ENCODE measurements at regions of chr2 and their contacts with region 1.

Region 1: DNA sequence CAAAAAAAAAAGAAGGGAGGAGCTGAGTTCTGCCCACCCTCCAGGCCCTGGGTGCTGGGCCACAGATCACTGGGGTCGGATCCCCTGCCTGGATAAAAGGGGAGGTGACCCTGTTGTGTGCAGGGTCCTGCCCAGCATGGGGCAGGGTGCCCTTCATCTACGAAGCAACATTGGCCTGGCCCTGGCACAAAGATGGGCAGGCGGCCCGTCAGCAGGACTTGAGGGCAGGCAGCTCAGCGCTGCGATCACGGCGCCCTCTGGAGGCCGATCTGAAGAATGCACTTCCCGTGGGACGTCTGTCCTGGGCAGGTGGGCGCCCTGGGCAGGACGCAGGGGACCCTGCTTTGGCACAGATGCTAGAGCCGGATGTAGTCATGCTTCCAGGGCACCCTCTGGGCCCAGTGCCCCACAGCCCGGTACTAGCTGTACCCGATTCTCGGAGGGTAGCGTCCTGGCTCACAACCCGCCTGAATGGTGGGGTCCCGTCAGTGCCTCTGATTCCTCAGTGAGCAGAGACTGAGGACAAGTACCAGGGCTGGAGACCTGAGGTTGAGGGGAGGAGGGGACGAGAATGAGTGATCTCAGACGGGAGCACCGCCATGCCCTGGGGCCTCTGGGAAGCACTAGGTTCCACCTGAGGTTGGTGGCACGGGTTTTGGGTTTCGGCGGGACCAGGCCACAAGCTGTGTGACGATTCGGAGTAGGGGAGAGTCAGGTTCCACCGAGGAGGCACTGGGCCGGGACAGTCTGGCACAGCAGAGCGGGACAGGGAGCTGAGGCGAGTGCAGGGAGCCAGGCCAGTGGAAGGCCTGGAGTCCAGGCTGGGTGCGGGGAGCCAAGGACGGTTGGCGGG is 18.0 kb downstream of the ARID5A start:
- DNase-seq: peak; percentile 44
- ATAC-seq: peak; percentile 31
- H3K4me3 ChIP-seq: peak overlapping the region; percentile 25 to 67 (median 29); a peak in 3 of 6 replicates
- H3K27ac ChIP-seq: no peak overlapping the region
- H3K4me1 ChIP-seq: peaks cover 69% of the 10 kb centered on the region
- H3K27me3 ChIP-seq: no peaks in the 10 kb centered on the region
- CTCF ChIP-seq: peak; percentile 97
- EP300 ChIP-seq: no peak
- POLR2A ChIP-seq: no peak
- RAD21 ChIP-seq: peak; percentile 87

Region 2: DNA sequence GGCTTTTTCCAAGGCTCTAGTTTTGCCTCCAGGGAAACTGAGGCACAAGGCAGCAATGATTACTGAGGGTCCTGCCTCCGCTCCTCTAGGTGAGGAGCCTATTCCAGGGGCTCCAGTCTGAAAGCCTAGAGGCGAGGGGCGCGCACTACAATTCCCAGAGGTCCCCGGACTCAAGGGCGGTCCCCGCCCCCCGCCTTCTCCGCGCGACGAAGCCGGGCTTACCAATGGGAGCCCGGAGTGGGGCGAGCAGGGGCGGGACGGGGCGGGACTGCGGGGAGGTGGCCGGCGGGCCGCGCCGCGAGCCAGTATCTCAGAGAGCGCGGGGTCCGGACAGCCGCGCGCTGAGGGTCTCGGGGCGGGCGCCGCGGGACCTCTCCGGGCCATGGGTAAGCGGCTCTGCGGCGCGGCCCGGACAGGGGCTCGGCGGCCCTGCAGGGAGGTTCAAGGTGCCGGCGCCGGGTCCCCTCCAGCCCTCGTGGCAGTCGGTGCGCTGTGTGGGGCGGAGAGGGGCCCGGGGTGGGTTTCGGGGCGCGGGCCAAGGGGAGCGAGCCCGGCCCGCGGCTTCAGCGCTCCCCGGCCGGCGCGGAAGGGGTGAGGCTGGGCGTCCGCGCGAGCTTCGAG is 18.0 kb before region 1 on chr2 and contains the start of gene ARID5A:
- CTCF ChIA-PET with region 1: interaction called, 3 read pairs
- POLR2A ChIA-PET with region 1: interaction called, 18 read pairs
- in situ Hi-C with region 1: no loop called
- intact Hi-C with region 1: no loop called
- DNase-seq: peak; percentile 87
- ATAC-seq: peak; percentile 90
- H3K4me3 ChIP-seq: peak within 1 kb of the TSS; percentile 70 to 79 (median 74)
- H3K27ac ChIP-seq: no peak within 1 kb of the TSS
- H3K4me1 ChIP-seq: peaks cover 52% of the 10 kb centered on the region
- H3K27me3 ChIP-seq: peaks cover 3 to 37% of the 10 kb centered on the region in 2 experiments; a peak in 4 of 5 replicates
- CTCF ChIP-seq: no peak
- EP300 ChIP-seq: no peak
- POLR2A ChIP-seq: peak; percentile 43 to 88; a peak in 3 of 4 replicates
- RAD21 ChIP-seq: peak; percentile 11; the same call in 1 of the 2 replicates
- total RNA-seq, gene ARID5A: 8.0 and 9.5 TPM in 2 replicates

Region 3: DNA sequence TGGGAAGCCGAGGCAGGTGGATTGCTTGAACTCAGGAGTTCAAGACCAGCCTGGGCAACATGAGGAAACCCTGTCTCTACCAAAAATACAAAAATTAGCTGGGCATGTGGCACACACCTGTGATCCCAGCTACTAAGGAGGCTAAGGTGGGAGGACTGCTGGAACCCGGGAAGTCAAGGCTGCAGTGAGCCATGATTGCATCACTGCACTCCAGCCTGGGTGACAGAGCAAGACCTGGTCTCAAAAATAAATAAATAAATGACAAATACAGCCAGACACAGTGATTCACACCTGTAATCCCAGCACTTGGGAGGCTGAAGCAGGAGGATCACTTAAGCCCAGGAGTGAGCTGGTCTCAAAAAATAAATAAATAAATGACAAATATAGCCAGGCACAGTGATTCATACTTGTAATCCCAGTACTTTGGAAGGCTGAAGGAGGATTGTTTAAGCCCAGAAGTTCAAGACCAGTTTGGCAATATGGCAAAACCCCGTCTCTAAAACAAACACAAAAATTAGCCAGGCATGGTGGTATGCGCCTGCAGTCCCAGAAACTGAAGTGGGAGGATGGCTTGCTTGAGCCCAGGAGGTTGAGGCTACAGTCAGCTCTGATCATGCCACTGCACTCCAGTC is 77.4 kb after region 1 on chr2:
- CTCF ChIA-PET with region 1: no interaction called
- POLR2A ChIA-PET with region 1: interaction called, 7 read pairs
- in situ Hi-C with region 1: no loop called
- intact Hi-C with region 1: loop called (anchors 5 kb)
- DNase-seq: peak; percentile 16
- ATAC-seq: no peak; the same call in 2 of the 3 replicates
- H3K4me3 ChIP-seq: no peak overlapping the region
- H3K27ac ChIP-seq: no peak overlapping the region
- H3K4me1 ChIP-seq: peaks cover 33% of the 10 kb centered on the region
- H3K27me3 ChIP-seq: no peaks in the 10 kb centered on the region
- CTCF ChIP-seq: no peak
- EP300 ChIP-seq: no peak
- POLR2A ChIP-seq: no peak
- RAD21 ChIP-seq: no peak

Region 4: DNA sequence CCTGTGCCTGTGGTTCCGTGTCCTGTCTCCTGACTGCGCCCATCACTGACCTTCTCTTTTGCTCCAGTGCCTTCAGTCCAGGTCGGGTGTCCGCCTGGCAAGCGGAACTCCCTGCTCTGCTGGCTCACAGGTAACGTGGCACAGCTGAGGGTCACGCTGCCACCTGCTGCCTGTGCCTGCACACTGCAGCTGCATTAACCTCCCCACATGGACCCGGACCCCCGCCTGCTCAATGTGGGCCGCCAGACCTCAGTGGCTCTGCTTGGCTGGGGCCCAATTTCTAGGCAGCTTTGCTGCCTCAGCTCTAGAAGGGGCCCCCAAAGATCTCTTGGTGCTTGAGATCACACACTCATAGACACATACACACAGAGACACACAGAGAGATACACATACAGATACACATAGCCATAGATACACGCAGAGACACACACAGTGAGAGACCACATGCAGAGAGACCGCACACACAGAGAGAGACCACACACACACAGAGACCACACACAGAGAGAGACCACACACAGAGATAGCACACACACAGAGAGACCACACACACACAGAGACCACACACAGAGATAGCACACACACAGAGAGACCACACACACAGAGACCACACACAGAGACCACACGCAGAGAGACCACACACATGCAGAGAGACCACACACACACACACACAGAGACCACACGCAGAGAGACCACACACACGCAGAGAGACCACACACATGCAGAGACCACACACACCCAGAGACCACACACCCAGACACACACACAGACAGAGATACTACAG is 246.7 kb after region 1 on chr2:
- CTCF ChIA-PET with region 1: interaction called, 8 read pairs
- POLR2A ChIA-PET with region 1: interaction called, 4 read pairs
- in situ Hi-C with region 1: no loop called
- intact Hi-C with region 1: loop called (anchors 2 kb)
- DNase-seq: peak; percentile 71
- ATAC-seq: peak; percentile 95
- H3K4me3 ChIP-seq: peak overlapping the region in 1 of 3 experiments; percentile 11; a peak in 1 of 6 replicates
- H3K27ac ChIP-seq: no peak overlapping the region
- H3K4me1 ChIP-seq: peaks cover 25% of the 10 kb centered on the region
- H3K27me3 ChIP-seq: no peaks in the 10 kb centered on the region
- CTCF ChIP-seq: peak; percentile 97
- EP300 ChIP-seq: no peak
- POLR2A ChIP-seq: no peak
- RAD21 ChIP-seq: peak; percentile 97

Region 5: DNA sequence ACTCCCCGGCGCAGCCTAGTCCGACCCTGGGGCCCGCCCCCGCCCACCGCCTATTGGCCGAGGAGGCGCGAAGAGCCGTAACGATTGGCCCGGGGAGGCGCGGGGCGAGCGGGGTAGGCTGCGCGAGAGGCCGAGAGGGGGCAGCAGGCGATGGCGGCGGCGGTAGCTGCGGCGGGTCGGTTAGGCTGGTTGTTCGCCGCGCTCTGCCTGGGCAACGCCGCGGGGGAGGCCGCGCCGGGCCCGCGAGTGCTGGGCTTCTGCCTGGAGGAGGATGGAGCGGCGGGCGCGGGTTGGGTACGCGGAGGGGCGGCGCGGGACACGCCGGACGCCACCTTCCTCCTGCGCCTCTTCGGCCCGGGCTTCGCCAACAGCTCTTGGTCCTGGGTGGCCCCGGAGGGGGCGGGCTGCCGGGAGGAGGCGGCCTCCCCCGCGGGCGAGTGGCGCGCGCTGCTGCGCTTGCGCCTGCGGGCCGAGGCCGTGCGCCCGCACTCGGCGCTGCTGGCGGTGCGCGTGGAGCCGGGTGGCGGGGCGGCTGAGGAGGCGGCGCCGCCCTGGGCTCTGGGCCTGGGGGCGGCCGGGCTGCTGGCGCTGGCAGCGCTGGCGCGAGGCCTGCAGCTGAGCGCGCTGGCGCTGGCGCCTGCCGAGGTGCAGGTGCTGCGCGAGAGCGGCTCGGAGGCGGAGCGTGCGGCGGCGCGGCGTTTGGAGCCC is 261.8 kb after region 1 on chr2 and contains the start of gene CNNM3:
- CTCF ChIA-PET with region 1: no interaction called
- POLR2A ChIA-PET with region 1: interaction called, 11 read pairs
- in situ Hi-C with region 1: no loop called
- intact Hi-C with region 1: no loop called
- DNase-seq: peak; percentile 91
- ATAC-seq: peak; percentile 87
- H3K4me3 ChIP-seq: peak within 1 kb of the TSS; percentile 87 to 96 (median 91)
- H3K27ac ChIP-seq: peak within 1 kb of the TSS; percentile 92
- H3K4me1 ChIP-seq: peaks cover 72% of the 10 kb centered on the region
- H3K27me3 ChIP-seq: no peaks in the 10 kb centered on the region; a peak in 1 of 5 replicates
- CTCF ChIP-seq: peak; percentile 72
- EP300 ChIP-seq: no peak
- POLR2A ChIP-seq: peak in 1 of 2 experiments; percentile 65; a peak in 2 of 4 replicates
- RAD21 ChIP-seq: peak; percentile 27
- total RNA-seq, gene CNNM3: 8.4 and 21.2 TPM in 2 replicates

Region 6: DNA sequence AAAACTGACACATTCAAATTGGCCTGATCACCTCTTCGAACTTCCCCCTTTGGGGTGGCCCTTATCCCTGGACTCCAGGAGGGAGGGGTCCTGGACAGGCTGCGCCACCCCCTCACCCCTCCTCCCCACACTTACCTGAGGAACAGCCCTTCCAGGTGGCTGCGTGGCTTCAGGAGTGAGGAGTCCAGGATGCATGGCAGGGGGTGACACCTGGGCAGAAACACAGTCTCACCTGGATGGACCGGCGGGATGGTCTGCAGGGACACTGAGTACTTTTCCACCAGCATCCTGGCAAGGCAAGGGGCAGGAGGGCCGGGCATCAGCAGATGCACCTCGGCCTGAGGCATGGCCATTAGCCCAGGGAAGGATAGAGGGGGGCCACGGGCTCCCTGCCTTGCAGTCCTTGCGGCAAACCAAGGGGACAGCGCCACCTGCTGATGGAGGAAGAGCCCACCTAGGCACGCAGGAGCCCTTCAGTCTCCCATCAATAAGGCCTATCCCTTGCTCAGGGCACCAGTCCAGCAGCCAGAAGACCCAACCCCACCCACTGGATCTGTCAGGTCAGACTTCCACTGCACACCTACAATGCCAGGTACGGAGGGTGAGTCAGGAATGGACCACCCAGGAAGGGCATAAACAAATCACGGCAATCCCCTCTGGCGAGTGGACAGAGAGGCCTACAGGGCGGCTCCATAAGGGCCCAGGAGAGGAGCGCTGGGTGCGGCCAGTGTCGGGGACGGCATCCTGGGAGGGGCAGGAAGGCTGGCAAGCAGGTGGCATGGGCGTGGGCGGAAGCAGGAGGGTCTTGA is 405.8 kb after region 1 on chr2:
- CTCF ChIA-PET with region 1: interaction called, 4 read pairs
- POLR2A ChIA-PET with region 1: no interaction called
- in situ Hi-C with region 1: no loop called
- intact Hi-C with region 1: loop called (anchors 1 kb)
- DNase-seq: peak; percentile 76
- ATAC-seq: peak; percentile 98
- H3K4me3 ChIP-seq: no peak overlapping the region
- H3K27ac ChIP-seq: no peak overlapping the region
- H3K4me1 ChIP-seq: no peaks in the 10 kb centered on the region
- H3K27me3 ChIP-seq: peaks cover 0 to 35% of the 10 kb centered on the region in 2 experiments; a peak in 3 of 5 replicates
- CTCF ChIP-seq: peak; percentile 100
- EP300 ChIP-seq: no peak
- POLR2A ChIP-seq: no peak
- RAD21 ChIP-seq: peak; percentile 97